GM18951 (cell line): ENCODE measurements at regions of chr12 and their contacts with region 1.

Region 1: GRCh38 chr12:108526482-108527165 is 11.5 kb downstream of the FICD start:
- POLR2A ChIP-seq: no peak

Region 2: DNA sequence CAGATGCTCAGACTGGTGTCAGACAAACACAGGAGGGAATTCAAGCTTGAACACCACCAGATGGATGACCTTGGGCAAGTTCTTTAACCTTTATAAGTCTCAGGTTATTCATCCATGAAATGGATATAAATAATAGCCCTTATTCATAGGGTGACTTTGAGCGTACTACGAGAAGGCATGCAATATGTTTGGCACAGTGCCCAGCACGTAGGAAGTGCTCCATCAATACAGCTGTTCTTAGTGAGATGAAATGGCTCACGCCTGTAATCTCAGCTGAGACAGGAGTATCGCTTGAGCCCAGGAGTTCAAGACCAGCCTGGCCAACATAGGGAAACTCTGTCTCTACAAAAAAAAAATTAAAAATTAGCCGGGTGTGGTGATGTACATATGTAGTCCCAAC is 96.4 kb before region 1 on chr12:
- in situ Hi-C with region 1: no loop called
- POLR2A ChIP-seq: no peak

Region 3: DNA sequence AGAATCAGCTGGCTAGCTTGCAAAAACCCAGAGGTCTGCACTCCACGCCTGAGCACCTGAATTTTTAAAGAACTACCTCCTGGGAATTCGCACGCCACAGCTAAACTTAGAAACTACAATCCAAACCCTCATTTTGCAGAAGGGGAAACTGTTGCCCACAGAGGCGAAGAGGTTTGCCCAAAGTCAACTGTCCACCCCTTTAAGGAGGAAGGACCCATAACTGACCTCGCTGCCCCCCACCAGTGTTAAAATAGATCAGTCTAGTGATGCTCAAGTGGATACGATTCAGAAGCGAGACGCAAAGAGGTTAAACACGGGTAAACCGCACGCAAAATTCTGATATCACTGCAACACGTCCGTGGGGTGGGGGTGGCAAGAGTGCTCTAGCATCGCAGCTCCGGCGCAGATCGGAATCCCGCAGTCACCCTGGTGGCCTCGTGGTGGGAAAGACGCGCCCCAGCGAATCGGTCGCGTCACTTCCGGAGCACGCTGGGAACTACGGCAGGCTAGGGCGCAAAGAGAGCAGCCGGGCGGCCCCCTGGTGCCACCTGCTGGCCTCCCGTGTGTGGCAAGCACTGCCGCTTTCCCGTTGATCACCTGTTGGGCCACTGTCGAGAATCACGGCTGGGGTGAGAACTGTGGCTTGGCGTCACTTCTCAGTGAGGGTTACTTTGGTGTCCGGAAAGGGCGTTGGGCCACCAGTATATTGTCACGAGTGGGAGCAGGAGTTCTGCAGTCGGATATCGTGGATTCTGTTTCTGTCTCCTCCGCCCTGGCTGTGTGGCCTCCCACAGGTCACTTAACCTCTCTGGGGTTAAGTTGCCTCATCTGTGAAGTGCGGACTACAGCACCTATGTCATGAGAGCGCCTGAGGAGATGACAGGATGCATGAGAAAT is 566.6 kb after region 1 on chr12 and contains the start of gene ALKBH2:
- in situ Hi-C with region 1: loop called (anchors 25 kb)
- POLR2A ChIP-seq: peak; percentile 81